Caco-2 (cell line): ENCODE measurements at regions of chr3 and their contacts with region 1.

Region 1: GRCh38 chr3:152268555-152269425 is at the start of gene MBNL1:
- DNase-seq: peak; percentile 77 to 81
- H3K4me3 ChIP-seq: peak within 1 kb of the TSS; percentile 94
- H3K4me3 Mint-ChIP-seq: peak within 1 kb of the TSS; percentile 91
- H3K27ac Mint-ChIP-seq: peak within 1 kb of the TSS; percentile 56
- H3K4me1 ChIP-seq: peaks cover 42% of the 10 kb centered on the region
- H3K4me1 Mint-ChIP-seq: peaks cover 47% of the 10 kb centered on the region
- H3K27me3 ChIP-seq: no peaks in the 10 kb centered on the region
- H3K27me3 Mint-ChIP-seq: no peaks in the 10 kb centered on the region
- CTCF ChIP-seq: no peak
- total RNA-seq, gene MBNL1: 67.1 and 68.6 TPM in 2 replicates

Region 2: DNA sequence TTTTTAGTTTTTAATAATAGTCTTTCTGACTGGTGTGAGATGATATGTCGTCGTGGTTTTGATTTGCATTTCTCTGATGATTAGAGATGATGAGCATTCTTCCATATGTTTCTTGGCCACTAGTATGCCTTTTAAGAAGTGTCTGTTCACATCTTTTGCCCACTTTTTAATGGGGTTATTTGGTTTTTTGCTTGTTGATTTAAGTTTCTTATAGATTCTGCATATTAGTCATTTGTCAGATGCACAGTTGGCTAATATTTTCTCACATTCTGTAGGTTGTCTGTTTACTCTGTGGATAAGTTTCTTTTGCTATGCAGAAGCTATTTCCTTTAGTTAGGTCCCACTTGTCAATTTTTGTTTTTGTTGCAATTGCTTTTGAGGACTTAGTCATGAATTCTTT is 209.9 kb before region 1 on chr3:
- CTCF ChIA-PET with region 1: no interaction called
- POLR2A ChIA-PET with region 1: no interaction called
- intact Hi-C with region 1: loop called (anchors 5 kb)
- DNase-seq: no peak
- H3K4me3 ChIP-seq: no peak overlapping the region
- H3K4me3 Mint-ChIP-seq: no peak overlapping the region
- H3K27ac Mint-ChIP-seq: peak overlapping the region; percentile 23
- H3K4me1 ChIP-seq: peaks cover 25% of the 10 kb centered on the region
- H3K4me1 Mint-ChIP-seq: peaks cover 25% of the 10 kb centered on the region
- H3K27me3 ChIP-seq: no peaks in the 10 kb centered on the region
- H3K27me3 Mint-ChIP-seq: no peaks in the 10 kb centered on the region
- CTCF ChIP-seq: no peak

Region 3: DNA sequence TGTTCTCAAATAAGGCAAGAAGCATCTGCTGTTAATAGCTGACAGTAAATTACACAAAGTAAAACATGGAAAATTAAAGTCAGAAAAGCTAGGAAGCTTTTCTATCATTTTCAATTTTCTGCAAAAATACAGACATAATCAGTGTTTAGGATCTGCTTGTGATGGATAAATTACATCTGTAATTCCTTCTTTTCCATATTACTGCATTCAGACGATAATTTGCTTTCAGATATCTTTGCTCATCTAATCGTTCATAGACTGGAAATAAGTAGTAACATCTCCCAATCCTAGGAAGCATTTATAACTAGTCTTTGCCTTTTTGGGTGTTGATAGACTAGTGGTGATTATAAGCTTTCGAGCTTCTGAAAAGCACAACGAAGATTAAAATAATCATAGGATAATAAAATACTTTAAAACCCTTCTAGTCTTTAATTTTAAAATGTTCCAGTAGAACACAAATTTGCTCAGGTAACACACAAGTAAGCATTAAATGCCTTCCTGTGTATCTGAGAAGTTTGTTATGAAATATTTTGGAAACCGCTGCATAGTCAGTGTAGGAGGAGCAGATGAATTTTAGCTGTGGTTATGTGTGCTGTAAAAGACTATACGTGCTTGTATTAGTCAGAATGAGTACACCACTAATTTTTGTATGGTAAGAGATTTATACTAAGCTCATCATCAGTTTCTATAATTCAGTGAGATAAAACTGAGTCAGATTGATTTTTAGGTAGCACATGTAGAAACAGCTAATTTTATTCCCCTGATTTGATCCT is 40.9 kb after region 1 on chr3:
- CTCF ChIA-PET with region 1: interaction called, 3 read pairs
- POLR2A ChIA-PET with region 1: no interaction called
- intact Hi-C with region 1: loop called (anchors 1 kb)
- DNase-seq: no peak
- H3K4me3 ChIP-seq: no peak overlapping the region
- H3K4me3 Mint-ChIP-seq: no peak overlapping the region
- H3K27ac Mint-ChIP-seq: no peak overlapping the region
- H3K4me1 ChIP-seq: peaks cover 59% of the 10 kb centered on the region
- H3K4me1 Mint-ChIP-seq: peaks cover 17% of the 10 kb centered on the region
- H3K27me3 ChIP-seq: no peaks in the 10 kb centered on the region
- H3K27me3 Mint-ChIP-seq: no peaks in the 10 kb centered on the region
- CTCF ChIP-seq: no peak

Region 4: GRCh38 chr3:152390647-152391046 is 121.9 kb after region 1 on chr3:
- CTCF ChIA-PET with region 1: no interaction called
- POLR2A ChIA-PET with region 1: no interaction called
- intact Hi-C with region 1: loop called (anchors 5 kb)
- DNase-seq: no peak
- H3K4me3 ChIP-seq: no peak overlapping the region
- H3K4me3 Mint-ChIP-seq: no peak overlapping the region
- H3K27ac Mint-ChIP-seq: peak overlapping the region; percentile 68
- H3K4me1 ChIP-seq: peaks cover 62% of the 10 kb centered on the region
- H3K4me1 Mint-ChIP-seq: peaks cover 20% of the 10 kb centered on the region
- H3K27me3 ChIP-seq: no peaks in the 10 kb centered on the region
- H3K27me3 Mint-ChIP-seq: no peaks in the 10 kb centered on the region
- CTCF ChIP-seq: no peak